ENCODE measurements at regions of chr17 and their contacts with region 1.

Region 1: GRCh38 chr17:48791128-48792032 is 25.6 kb downstream of the TTLL6 start:
- DNase-seq: peak; percentile 92 to 94
- ATAC-seq: peak; percentile 77 to 89
- H3K4me3 ChIP-seq: no peak overlapping the region
- H3K27ac ChIP-seq: peak overlapping the region; percentile 68
- H3K4me1 ChIP-seq: peaks cover 49% of the 10 kb centered on the region
- CTCF ChIP-seq: peak; percentile 96
- EP300 ChIP-seq: no peak
- POLR2A ChIP-seq: no peak
- RAD21 ChIP-seq: peak; percentile 96 to 98

Region 2: DNA sequence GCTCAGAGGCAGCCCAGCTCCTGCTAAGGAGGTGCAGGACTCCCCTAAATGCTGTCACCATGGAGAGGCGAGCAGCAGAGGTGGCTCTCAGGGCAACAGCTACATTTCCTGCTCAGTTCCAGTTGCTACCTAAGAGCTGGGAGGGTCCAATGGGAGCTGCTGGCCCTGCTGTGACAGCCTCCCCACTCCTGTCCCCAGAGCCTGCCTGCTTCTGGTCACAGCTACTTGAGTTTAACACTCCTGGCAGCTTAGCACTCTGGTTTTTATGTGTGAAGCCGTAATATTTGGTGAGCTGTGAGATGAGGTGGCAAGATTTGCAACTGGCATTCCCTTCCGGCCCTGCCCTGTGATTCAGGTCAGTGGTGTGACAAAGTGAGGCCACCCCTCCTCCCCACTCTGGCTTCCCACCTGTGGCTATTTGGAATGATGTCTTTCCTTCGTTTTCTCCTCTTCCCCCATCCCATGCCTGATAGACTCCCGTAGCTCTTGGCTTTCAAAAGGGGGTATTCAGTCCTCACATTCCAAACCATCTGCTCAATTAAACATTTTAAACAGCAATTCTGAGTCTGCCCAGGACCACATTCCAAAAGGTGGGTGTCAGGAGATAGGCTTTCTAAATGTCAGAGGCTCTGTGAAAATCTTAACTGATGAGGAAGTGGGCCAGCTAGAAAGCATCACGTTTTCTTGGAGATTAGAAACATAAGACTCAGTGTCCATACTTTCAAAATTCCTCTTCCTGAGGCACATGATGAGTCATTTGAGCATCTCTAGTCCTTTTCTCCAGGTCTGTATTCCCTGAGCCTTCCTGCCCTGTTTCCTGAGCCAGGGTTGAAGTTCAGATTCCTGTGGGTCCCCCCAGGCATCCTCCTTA is 318.7 kb before region 1 on chr17:
- CTCF ChIA-PET with region 1: no interaction called
- POLR2A ChIA-PET with region 1: no interaction called
- DNase-seq: peak in 1 of 2 experiments; percentile 32
- ATAC-seq: peak; percentile 38 to 48; a peak in 4 of 6 replicates
- H3K4me3 ChIP-seq: no peak overlapping the region
- H3K27ac ChIP-seq: 0 out of 6 replicates have a peak overlapping the region, but pooled peaks of 1 of the 2 experiments have one; percentile 12
- H3K4me1 ChIP-seq: peaks cover 6% of the 10 kb centered on the region; the same call in 2 of the 3 replicates
- CTCF ChIP-seq: no peak
- EP300 ChIP-seq: no peak
- POLR2A ChIP-seq: no peak
- RAD21 ChIP-seq: no peak

Region 3: GRCh38 chr17:48704361-48705248 is 86.8 kb before region 1 on chr17:
- CTCF ChIA-PET with region 1: interaction called, 852 read pairs
- POLR2A ChIA-PET with region 1: no interaction called
- DNase-seq: no peak
- ATAC-seq: no peak
- H3K4me3 ChIP-seq: no peak overlapping the region
- H3K27ac ChIP-seq: no peak overlapping the region
- H3K4me1 ChIP-seq: no peaks in the 10 kb centered on the region
- CTCF ChIP-seq: no peak
- EP300 ChIP-seq: no peak
- POLR2A ChIP-seq: no peak
- RAD21 ChIP-seq: no peak

Region 4: DNA sequence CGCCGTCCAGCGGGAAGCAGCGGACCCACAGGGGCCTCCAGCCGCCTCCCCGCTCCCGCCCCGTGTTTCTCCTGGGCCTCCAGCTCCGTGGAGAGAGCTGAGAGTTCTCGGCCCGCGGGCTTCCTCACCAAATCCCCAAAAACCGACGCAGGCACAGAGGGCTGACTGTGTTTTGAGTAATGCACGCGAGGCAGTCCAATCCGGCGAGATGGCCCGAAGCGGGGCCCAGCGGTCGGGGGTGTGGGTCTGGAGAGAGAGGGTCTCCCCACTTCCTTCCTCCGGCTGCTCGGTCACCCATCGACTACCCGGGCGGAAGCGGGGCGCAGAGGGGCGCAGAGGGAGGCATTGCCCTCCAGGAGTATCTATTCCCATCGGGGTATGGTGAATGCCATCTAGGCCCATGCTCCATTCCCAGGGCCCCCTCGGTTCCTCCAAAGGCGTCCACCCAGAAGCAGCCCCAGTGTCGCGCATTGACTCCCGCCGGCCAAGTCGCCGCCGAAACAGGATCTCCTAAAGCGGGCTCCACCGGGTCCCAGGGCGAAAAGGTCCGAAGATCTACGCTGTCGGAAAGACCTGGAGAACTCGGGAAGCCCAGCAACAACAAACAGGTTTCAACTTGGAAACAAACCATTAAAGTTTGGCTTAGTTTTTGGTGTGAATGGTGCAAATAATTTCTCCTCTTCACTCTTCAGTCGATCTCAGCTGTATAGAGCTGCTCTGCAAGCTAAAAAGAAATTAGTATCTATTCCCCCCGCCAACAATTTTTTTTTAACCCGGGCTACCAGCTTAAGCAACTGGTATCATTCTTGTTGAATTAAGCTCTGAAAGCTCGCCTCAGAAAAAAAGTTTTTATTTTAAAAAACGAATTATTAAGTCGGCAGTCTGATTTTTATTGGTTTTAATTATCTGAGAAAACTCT is 43.7 kb before region 1 on chr17:
- CTCF ChIA-PET with region 1: interaction called, 15 read pairs
- POLR2A ChIA-PET with region 1: no interaction called
- DNase-seq: no peak
- ATAC-seq: no peak
- H3K4me3 ChIP-seq: no peak overlapping the region
- H3K27ac ChIP-seq: no peak overlapping the region
- H3K4me1 ChIP-seq: peaks cover 17% of the 10 kb centered on the region; the same call in 2 of the 3 replicates
- CTCF ChIP-seq: no peak
- EP300 ChIP-seq: no peak
- POLR2A ChIP-seq: no peak
- RAD21 ChIP-seq: no peak

Region 5: GRCh38 chr17:48779421-48779820 is 12.0 kb before region 1 on chr17:
- CTCF ChIA-PET with region 1: interaction called, 23 read pairs
- POLR2A ChIA-PET with region 1: no interaction called
- DNase-seq: no peak
- ATAC-seq: no peak
- H3K4me3 ChIP-seq: no peak overlapping the region
- H3K27ac ChIP-seq: no peak overlapping the region
- H3K4me1 ChIP-seq: no peaks in the 10 kb centered on the region
- CTCF ChIP-seq: no peak
- EP300 ChIP-seq: no peak
- POLR2A ChIP-seq: no peak
- RAD21 ChIP-seq: no peak

Region 6: GRCh38 chr17:48816774-48817590 is 25.6 kb after region 1 on chr17 and contains the start of gene TTLL6:
- CTCF ChIA-PET with region 1: interaction called, 3,251 read pairs
- POLR2A ChIA-PET with region 1: no interaction called
- DNase-seq: peak; percentile 90 to 97
- ATAC-seq: peak; percentile 95 to 97
- H3K4me3 ChIP-seq: peak within 1 kb of the TSS; percentile 54
- H3K27ac ChIP-seq: peak within 1 kb of the TSS; percentile 56 to 76
- H3K4me1 ChIP-seq: peaks cover 23% of the 10 kb centered on the region; the same call in 2 of the 3 replicates
- CTCF ChIP-seq: no peak
- EP300 ChIP-seq: no peak
- POLR2A ChIP-seq: no peak; the same call in 1 of the 2 replicates
- RAD21 ChIP-seq: no peak
- polyA plus RNA-seq, gene TTLL6: 7.8 and 8.9 TPM in 2 replicates

Measured in A549 (cell line).